Heart left ventricle (tissue), 16 donors: ENCODE measurements at regions of chr10 and their contacts with region 1.

Region 1: GRCh38 chr10:17228091-17228940 is at the start of gene VIM:
- DNase-seq: peak; percentile 89 to 94 (median 92)
- ATAC-seq: peak; percentile 49 to 83 (median 80)
- H3K4me3 ChIP-seq: peak within 1 kb of the TSS; percentile 64 to 99 (median 91)
- H3K27ac ChIP-seq: peak within 1 kb of the TSS; percentile 96 to 100 (median 98)
- H3K4me1 ChIP-seq: peaks cover 0 to 52% (median 30%) of the 10 kb centered on the region in 12 donors
- H3K27me3 ChIP-seq: peaks cover 0 to 17% (median 0%) of the 10 kb centered on the region in 9 donors
- CTCF ChIP-seq: peak in 4 of 12 donors; percentile 4 to 13 (median 9)
- POLR2A ChIP-seq: peak in 1 of 2 donors; percentile 67
- total RNA-seq, gene VIM: 249 to 1,163 (median 387) TPM

Region 2: GRCh38 chr10:16995867-16996529 is 232.3 kb before region 1 on chr10:
- intact Hi-C with region 1: loop called in 3 of 10 experiments (anchors 5 to 10 kb)
- DNase-seq: peak in 1 of 5 donors; percentile 26
- ATAC-seq: peak; percentile 43 to 87 (median 68)
- H3K4me3 ChIP-seq: no peak overlapping the region
- H3K27ac ChIP-seq: peak overlapping the region in 10 of 12 donors; percentile 17 to 80 (median 60)
- H3K4me1 ChIP-seq: peaks cover 0 to 47% (median 19%) of the 10 kb centered on the region in 12 donors
- H3K27me3 ChIP-seq: no peaks in the 10 kb centered on the region
- CTCF ChIP-seq: no peak
- POLR2A ChIP-seq: no peak

Region 3: DNA sequence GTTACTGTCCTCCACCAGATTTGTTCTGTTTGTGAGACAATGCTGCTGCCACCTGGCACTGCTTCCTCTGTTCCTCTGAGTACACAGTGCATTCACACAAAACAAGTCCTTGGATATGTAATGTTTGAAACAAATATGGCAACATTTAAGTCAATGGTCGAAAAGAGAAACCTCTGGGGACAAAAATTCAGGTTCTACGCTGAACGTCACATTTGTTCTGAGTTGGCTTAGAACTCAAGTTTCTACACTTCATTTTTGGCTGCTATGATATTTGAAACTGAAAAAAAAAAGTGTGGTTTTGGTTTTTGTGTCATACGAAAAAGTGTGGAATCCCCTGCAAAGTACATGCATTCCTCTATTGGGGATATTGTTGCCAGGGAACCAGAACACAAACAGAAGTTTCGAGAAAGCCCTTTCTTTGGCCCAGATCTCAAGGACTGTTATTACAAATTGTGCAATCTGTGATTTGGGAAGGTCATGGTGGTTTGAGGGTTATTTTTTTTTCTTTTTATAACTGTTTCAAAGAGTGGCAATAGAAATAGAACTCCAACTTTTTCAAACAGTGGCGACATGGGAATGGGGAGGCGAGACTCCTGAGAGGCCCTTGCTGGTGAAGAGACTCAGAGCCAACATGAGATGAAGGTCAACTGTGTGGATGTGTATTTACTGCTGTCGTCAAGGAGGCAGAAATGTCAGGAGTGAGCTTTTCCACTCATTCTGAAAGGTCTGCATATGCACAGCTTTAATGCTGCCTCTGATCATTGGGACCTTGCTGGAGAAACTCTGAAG is 226.2 kb before region 1 on chr10:
- intact Hi-C with region 1: loop called in 4 of 10 experiments (anchors 5 to 10 kb)
- DNase-seq: peak in 4 of 5 donors; percentile 44 to 47 (median 46)
- ATAC-seq: peak; percentile 73 to 81 (median 77)
- H3K4me3 ChIP-seq: no peak overlapping the region
- H3K27ac ChIP-seq: peak overlapping the region; percentile 33 to 91 (median 66)
- H3K4me1 ChIP-seq: peaks cover 0 to 59% (median 14%) of the 10 kb centered on the region in 12 donors
- H3K27me3 ChIP-seq: no peaks in the 10 kb centered on the region
- CTCF ChIP-seq: no peak
- POLR2A ChIP-seq: no peak

Region 4: GRCh38 chr10:17092216-17092944 is 135.9 kb before region 1 on chr10:
- intact Hi-C with region 1: no loop called
- DNase-seq: no peak
- ATAC-seq: no peak
- H3K4me3 ChIP-seq: no peak overlapping the region
- H3K27ac ChIP-seq: no peak overlapping the region
- H3K4me1 ChIP-seq: no peaks in the 10 kb centered on the region
- H3K27me3 ChIP-seq: no peaks in the 10 kb centered on the region
- CTCF ChIP-seq: no peak
- POLR2A ChIP-seq: no peak

Region 5: GRCh38 chr10:17181758-17182157 is 46.6 kb before region 1 on chr10:
- intact Hi-C with region 1: loop called in 1 of 10 experiments (anchors 5 kb)
- DNase-seq: no peak
- ATAC-seq: no peak
- H3K4me3 ChIP-seq: no peak overlapping the region
- H3K27ac ChIP-seq: no peak overlapping the region
- H3K4me1 ChIP-seq: no peaks in the 10 kb centered on the region
- H3K27me3 ChIP-seq: no peaks in the 10 kb centered on the region
- CTCF ChIP-seq: no peak
- POLR2A ChIP-seq: no peak